ENCODE measurements at regions of chr4 and their contacts with region 1.

Region 1: DNA sequence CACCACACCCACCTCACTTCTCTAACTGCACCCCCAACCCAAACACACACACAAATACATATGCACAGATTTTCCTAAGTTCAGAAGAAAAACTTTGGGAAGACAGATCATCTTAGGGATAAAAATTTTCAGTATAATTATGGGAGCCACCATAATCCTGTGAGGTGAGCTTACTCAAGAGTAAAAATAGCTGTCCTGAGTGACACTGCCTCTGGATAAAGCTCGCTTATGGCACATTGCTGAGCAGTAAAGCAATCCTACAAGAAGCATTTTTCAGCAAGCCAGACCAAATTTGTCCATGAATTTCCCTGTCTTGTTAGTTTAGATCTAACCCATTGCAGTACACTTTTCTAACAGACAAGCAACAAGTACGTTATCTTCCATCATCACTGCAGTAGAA is 83.8 kb downstream of the INPP4B start:
- DNase-seq: no peak
- H3K4me3 ChIP-seq: no peak overlapping the region
- H3K27ac ChIP-seq: no peak overlapping the region
- H3K4me1 ChIP-seq: no peaks in the 10 kb centered on the region
- H3K27me3 ChIP-seq: no peaks in the 10 kb centered on the region
- CTCF ChIP-seq: no peak

Region 2: GRCh38 chr4:142719854-142720541 is 42.3 kb before region 1 on chr4:
- dilution Hi-C with region 1: loop called (anchors 5 kb)
- DNase-seq: no peak
- H3K4me3 ChIP-seq: peak overlapping the region in 1 of 3 experiments; percentile 35
- H3K27ac ChIP-seq: peak overlapping the region; percentile 58
- H3K4me1 ChIP-seq: peaks cover 25% of the 10 kb centered on the region
- H3K27me3 ChIP-seq: no peaks in the 10 kb centered on the region
- CTCF ChIP-seq: peak in 2 of 3 experiments; percentile 13 to 33

Region 3: DNA sequence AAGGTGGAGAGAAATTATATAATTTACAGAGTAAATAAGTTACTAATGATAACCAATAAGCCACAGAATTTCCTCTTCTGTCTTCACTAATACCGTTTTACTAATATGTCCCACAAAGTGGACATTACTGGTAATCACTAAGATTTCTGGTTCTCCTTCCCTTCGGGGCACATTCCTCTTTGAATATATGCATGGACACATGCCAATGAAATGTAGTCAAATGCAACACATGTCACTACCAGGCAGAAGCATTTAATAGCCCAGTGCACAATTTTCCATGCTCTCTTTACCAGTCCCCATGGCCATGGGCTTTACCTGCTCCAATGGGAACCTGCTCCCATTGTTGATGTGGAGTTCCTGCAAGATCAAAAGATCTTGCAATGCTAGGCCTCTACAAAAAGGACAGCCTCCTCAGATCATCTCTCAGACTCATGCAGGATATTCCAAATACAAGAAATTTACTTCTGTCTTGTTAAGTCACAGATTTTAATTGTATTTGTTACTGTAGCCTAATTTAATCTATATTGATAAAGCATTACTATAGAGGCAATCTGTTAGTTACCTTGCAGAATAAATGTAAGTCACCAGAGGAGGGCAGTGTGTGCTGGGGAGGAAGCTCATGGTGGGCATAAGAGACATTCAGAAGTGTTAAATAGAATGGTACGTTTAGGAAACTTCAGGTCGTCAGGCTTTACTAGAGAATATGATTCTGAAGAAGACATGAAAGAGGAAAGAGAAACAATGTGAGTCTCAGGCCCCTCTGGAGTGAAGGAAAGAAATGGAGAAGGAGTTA is 121.0 kb after region 1 on chr4:
- dilution Hi-C with region 1: no loop called
- DNase-seq: no peak
- H3K4me3 ChIP-seq: no peak overlapping the region
- H3K27ac ChIP-seq: no peak overlapping the region
- H3K4me1 ChIP-seq: peaks cover 4% of the 10 kb centered on the region
- H3K27me3 ChIP-seq: peaks cover 3% of the 10 kb centered on the region
- CTCF ChIP-seq: peak in 2 of 3 experiments; percentile 15 to 35

Measured in keratinocyte (primary cell).